SK-N-SH (cell line): ENCODE measurements at regions of chr6 and their contacts with region 1.

Region 1: DNA sequence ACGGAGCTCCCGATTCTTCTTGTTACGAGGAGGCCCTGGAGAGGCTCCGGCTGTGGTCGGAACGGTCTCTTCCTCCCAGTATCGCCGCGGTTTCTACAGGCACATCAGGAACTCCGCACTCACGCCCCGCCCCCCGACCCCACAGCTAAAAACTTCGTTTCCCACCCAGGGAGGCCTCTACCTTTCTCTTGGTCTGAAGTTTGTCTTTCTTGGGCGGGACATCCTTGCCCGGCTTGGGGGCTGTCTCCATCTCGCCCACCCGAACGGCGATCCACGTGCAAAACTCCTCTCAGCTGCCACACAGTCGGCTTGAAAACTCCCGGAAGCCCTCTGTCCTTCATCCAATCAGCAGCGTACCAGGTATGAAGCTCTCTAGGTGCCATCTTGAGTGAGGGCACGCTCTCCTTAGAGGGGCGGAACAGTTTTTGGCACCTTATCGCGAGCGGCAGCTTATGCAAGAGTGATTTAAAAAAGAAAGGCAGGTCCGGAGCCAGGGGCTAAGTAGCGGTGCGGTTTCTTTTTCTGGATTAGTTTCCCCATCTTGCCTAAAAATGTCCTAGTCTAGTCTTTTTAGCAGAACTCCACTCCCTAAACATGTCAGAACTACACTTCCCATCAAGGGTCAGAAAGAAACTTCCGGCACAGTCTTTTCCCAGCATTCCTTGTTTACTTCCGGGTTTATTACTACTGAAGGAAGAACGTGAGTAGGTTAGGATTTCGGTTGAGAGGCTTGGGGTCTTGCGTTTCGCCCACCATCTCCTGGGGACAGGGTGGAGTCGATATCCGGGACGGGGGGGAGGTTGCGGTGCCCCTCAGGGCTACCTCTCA is at the starts of genes PFDN6 and WDR46:
- DNase-seq: peak; percentile 88
- H3K4me3 ChIP-seq: peak within 1 kb of the TSS; percentile 78 to 96
- H3K27ac ChIP-seq: peak within 1 kb of the TSS; percentile 40 to 91; a peak in 3 of 4 replicates
- H3K4me1 ChIP-seq: peaks cover 5 to 23% of the 10 kb centered on the region in 2 experiments; a peak in 3 of 4 replicates
- H3K27me3 ChIP-seq: no peaks in the 10 kb centered on the region
- CTCF ChIP-seq: no peak
- EP300 ChIP-seq: no peak
- RAD21 ChIP-seq: no peak
- polyA plus RNA-seq, gene PFDN6: 182 and 213 TPM in 2 replicates
- polyA plus RNA-seq, gene WDR46: 153 and 172 TPM in 2 replicates

Region 2: DNA sequence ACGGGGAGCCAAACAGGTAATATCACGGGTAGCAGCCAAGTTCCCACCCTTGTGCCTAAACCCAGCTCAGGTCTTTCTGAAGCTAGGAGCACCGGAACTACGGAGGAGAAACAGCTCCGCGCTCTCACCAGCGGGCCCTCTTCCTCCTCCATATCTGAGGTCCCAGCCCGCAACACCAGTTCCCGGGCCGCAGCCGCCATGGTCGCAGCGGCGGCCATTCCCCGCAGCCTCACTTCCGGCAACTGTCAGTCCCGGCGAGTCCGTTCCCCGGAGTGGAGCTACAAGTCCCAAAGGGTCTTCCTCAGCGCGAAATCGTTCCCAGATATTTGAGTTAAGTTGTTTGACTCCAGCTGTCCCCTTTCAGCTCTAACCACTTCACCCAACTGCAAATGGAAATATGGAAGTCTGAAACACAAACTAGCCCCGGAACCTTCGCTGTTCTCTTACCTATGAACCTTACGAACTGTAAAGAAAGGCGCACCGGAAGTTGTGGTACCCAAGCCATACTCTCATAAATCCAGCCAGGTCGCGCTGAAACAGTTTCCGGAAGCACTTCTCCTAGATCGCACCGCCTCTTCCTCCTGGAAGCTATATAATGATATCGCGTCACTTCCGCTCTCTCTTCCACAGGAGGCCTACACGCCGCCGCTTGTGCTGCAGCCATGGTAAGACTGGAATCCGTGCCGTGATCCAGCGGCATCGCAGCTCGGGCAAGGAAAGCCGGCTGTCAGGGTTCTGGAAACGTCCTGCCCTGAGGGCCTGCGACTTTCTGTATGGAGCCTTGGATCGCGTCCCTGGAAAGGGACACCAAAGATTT is 17.5 kb before region 1 on chr6 and contains the starts of genes RPS18 and VPS52:
- CTCF ChIA-PET with region 1: interaction called, 49 read pairs
- POLR2A ChIA-PET with region 1: interaction called, 58 read pairs
- DNase-seq: peak; percentile 89
- H3K4me3 ChIP-seq: peak within 1 kb of the TSS; percentile 76 to 91
- H3K27ac ChIP-seq: peak within 1 kb of the TSS; percentile 88 to 99
- H3K4me1 ChIP-seq: peaks cover 30 to 39% of the 10 kb centered on the region in 2 experiments; a peak in 3 of 4 replicates
- H3K27me3 ChIP-seq: no peaks in the 10 kb centered on the region
- CTCF ChIP-seq: no peak
- EP300 ChIP-seq: no peak
- RAD21 ChIP-seq: no peak
- polyA plus RNA-seq, gene RPS18: 12,112 and 13,423 TPM in 2 replicates
- polyA plus RNA-seq, gene VPS52: 74.0 and 90.7 TPM in 2 replicates

Region 3: GRCh38 chr6:33276864-33277662 is 12.1 kb before region 1 on chr6 and contains the start of gene B3GALT4:
- CTCF ChIA-PET with region 1: interaction called, 49 read pairs
- POLR2A ChIA-PET with region 1: interaction called, 58 read pairs
- DNase-seq: peak; percentile 92
- H3K4me3 ChIP-seq: peak within 1 kb of the TSS; percentile 49 to 76
- H3K27ac ChIP-seq: peak within 1 kb of the TSS; percentile 67 to 86
- H3K4me1 ChIP-seq: peaks cover 31 to 36% of the 10 kb centered on the region in 2 experiments; a peak in 3 of 4 replicates
- H3K27me3 ChIP-seq: no peaks in the 10 kb centered on the region
- CTCF ChIP-seq: peak; percentile 51
- EP300 ChIP-seq: no peak
- RAD21 ChIP-seq: no peak
- polyA plus RNA-seq, gene B3GALT4: 0.55 and 0.56 TPM in 2 replicates